Transverse colon (tissue), 4 donors: ENCODE measurements at regions of chr11 and their contacts with region 1.

Region 1: DNA sequence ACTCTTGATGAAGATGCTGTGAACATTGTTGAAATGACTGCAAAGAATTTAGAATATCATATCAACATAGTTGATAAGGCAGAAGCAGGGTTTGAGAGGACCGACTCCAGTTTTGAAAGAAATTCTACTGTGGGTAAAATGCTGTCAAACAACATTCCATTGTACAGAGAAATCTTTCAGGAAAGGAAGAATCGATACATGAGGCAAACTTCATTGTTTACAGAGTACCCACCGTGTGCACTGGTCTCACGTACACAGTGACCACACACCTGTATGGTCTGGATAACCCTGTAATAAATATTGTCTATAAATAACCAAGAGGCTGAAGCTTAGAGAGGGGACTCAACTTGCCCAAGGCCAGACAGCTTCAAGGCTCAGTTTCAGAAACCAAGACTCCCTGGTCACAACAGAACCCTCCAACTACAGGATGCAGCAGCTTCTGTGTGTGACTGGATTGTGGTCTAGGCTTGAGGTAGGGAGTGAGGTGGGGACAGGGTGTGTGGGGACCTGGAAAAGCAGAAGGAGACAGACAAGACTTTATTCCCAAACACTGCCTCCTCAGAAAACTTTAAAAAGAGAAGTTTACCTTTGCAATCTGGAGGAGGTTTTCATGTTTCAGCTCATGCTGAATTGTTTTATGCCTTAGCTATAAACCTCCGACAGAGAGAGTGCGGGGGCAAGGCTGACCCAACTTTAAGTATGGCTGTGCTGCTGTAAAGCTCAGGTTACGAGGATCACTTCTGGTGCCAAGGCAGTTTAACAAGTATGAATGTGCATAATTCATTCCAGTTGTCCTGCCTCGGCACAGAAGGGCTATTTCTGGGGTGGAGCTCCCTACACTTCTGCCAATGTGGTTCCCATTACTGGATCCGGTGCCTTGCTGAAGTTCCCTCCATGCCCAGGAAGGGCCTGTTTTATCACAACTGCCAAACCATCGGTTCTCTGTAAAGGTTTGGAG is 372.6 kb upstream of the NARS2 start:
- DNase-seq: peak; percentile 9
- H3K4me3 ChIP-seq: no peak overlapping the region
- H3K27ac ChIP-seq: peak overlapping the region in 1 of 4 donors; percentile 5
- H3K4me1 ChIP-seq: peaks cover 0 to 4% (median 0%) of the 10 kb centered on the region in 4 donors
- H3K27me3 ChIP-seq: no peaks in the 10 kb centered on the region
- CTCF ChIP-seq: no peak
- EP300 ChIP-seq: no peak
- POLR2A ChIP-seq: no peak

Region 2: DNA sequence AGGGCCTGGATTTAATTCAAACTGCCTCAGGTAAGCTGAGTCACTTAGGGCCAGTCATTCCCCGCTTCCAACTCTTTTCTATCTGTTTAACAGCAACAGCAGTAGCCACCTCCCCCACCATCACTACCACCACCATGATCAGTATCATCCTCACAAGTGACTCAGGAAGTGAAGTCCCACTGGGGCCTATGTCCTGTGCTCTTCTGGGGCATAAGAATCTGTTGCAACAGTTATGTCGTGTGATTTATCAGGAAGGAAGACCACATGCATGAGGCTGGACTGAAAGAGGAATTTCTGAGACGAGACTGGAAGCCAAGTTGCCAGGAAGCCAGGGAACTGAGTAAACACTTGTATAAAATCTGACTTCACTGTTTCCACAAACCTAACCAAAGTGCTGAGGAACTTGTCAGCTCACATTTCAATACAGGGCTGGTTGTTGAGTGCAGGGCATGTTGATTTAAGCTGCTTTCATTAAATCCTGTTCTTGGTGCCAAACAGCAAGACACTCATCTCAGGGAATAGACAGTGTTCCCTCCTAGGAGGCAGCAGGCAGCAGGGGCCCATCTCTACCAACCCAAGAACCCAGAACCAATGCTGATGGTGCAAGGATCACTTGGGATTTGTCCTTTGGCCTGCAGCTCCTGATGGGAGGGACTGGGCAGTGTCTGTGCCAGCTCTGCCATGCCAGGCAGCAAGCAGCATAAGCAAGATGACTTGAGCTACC is 145.9 kb before region 1 on chr11:
- in situ Hi-C with region 1: no loop called
- intact Hi-C with region 1: loop called (anchors 5 kb)
- DNase-seq: peak; percentile 37
- H3K4me3 ChIP-seq: no peak overlapping the region
- H3K27ac ChIP-seq: peak overlapping the region; percentile 66 to 79 (median 76)
- H3K4me1 ChIP-seq: peaks cover 12 to 46% (median 17%) of the 10 kb centered on the region in 4 donors
- H3K27me3 ChIP-seq: no peaks in the 10 kb centered on the region
- CTCF ChIP-seq: no peak
- EP300 ChIP-seq: no peak
- POLR2A ChIP-seq: no peak

Region 3: DNA sequence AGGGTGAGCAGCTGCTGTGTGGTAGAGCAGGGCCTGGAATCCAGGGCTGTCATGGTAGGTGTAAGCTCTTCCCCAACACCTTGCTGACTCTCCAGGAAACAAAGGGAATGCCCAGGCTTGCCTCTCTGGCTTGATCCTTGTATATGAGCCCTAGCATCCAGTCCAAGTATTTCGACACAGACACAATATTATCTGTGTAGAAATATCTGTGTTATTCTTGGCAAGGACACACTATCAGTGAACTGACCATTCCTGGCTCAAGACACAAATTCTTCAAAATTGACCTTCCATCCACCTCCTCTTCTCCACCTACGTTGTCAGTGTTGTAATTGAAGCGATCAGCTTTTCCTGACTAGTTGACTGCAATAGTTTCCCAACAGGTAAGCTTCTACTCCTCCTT is 60.6 kb before region 1 on chr11:
- in situ Hi-C with region 1: no loop called
- intact Hi-C with region 1: no loop called
- DNase-seq: no peak
- H3K4me3 ChIP-seq: no peak overlapping the region
- H3K27ac ChIP-seq: no peak overlapping the region
- H3K4me1 ChIP-seq: no peaks in the 10 kb centered on the region
- H3K27me3 ChIP-seq: no peaks in the 10 kb centered on the region
- CTCF ChIP-seq: no peak
- EP300 ChIP-seq: no peak
- POLR2A ChIP-seq: no peak